ENCODE measurements at regions of chr18 and their contacts with region 1.

Region 1: GRCh38 chr18:60549338-60549960 is 176.9 kb upstream of the MC4R start:
- DNase-seq: peak in 4 of 7 donors; percentile 28 to 59 (median 38)
- H3K4me3 ChIP-seq: no peak overlapping the region
- H3K27ac ChIP-seq: no peak overlapping the region
- H3K4me1 ChIP-seq: no peaks in the 10 kb centered on the region
- H3K27me3 ChIP-seq: no peaks in the 10 kb centered on the region
- CTCF ChIP-seq: peak; percentile 49 to 83 (median 70)
- POLR2A ChIP-seq: no peak

Region 2: DNA sequence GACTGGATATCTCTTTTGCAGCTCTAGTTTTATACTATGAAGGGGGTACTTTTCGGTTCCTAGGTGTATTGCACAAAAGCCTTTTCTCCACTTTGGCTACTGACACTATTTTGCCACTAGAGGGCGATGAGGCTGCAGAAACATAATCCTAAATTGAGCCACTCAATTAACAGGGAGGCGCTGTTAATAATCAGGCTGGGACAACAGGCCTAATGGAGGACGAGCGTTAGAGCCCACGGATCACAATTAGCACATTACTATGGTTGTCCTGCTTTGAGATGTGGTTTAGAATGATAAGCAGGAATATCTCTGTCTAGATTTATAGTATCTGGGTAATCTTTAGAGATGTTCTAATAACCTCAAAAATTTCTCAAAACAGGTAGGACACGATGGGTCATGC is 711.9 kb before region 1 on chr18:
- intact Hi-C with region 1: loop called in 1 of 2 experiments (anchors 5 kb)
- DNase-seq: peak; percentile 19 to 65 (median 35)
- H3K4me3 ChIP-seq: no peak overlapping the region
- H3K27ac ChIP-seq: no peak overlapping the region
- H3K4me1 ChIP-seq: peaks cover 0 to 4% of the 10 kb centered on the region in 2 donors
- H3K27me3 ChIP-seq: no peaks in the 10 kb centered on the region
- CTCF ChIP-seq: peak; percentile 67 to 93 (median 77)
- POLR2A ChIP-seq: no peak